Activated CD8-positive, alpha-beta T cell treated with anti-CD3 and anti-CD28 coated beads for 36 hours (primary cell): ENCODE measurements at regions of chr12 and their contacts with region 1.

Region 1: DNA sequence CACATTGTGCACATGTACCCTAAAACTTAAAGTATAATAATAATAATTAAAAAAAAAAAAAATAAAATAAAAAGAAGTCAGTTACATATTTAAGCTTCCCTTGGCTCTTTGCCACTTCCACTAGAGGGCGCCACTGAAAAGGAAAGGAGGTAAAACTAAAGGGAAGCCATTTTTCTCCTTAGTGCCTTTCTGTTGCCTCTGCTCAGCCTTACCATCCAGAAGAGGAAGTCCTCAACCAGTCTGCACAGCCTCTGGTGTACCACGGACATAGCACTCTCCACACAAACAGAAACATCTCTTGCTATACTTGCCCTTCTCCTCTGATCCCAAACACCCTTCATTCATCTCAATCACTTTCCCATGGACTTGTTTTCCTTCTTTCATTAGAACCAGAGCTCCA is 169.0 kb upstream of the EEA1 start:
- DNase-seq: peak; percentile 86
- ATAC-seq: peak; percentile 83
- H3K4me3 Mint-ChIP-seq: no peak overlapping the region
- H3K27ac Mint-ChIP-seq: peak overlapping the region; percentile 11
- H3K4me1 Mint-ChIP-seq: peaks cover 18% of the 10 kb centered on the region
- H3K27me3 Mint-ChIP-seq: no peaks in the 10 kb centered on the region
- CTCF ChIP-seq: peak; percentile 73

Region 2: GRCh38 chr12:92784795-92785562 is 313.1 kb before region 1 on chr12:
- CTCF ChIA-PET with region 1: no interaction called
- POLR2A ChIA-PET with region 1: no interaction called
- intact Hi-C with region 1: loop called (anchors 10 kb)
- DNase-seq: peak; percentile 30
- ATAC-seq: peak; percentile 99
- H3K4me3 Mint-ChIP-seq: no peak overlapping the region
- H3K27ac Mint-ChIP-seq: peak overlapping the region; percentile 21
- H3K4me1 Mint-ChIP-seq: peaks cover 3% of the 10 kb centered on the region
- H3K27me3 Mint-ChIP-seq: no peaks in the 10 kb centered on the region
- CTCF ChIP-seq: peak; percentile 61

Region 3: DNA sequence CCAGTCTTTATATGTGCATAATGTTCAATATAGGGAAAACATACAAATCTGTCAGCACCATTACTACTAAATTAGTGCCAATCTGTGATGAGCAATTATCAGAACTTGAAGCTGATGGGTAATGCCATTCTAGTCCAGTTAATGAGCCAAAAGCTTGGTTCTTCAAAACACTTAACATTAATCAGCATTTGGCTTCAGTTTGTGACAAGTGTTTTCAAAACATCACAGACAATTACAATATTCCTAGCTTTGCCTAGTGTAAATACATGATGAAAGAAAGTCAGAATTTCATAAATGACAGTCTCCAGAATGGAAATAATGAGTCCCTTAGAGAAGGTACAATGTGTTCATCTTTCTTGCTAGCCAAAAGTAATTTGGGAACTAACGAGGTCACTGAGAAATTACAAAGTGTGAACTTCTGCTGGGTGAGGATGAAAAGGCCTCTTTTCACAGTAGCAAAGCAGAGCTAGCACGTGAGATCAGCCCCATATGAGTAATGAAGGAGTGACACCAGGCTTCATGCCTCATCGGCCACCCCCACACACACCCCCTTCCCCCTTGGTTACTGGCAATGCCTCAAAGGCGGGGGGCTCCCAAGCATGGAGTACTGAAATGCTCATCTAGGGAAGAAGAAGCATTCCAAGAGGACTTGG is 11.6 kb after region 1 on chr12:
- CTCF ChIA-PET with region 1: interaction called, 50 read pairs
- POLR2A ChIA-PET with region 1: interaction called, 3 read pairs
- intact Hi-C with region 1: no loop called
- DNase-seq: peak; percentile 57
- ATAC-seq: peak; percentile 88
- H3K4me3 Mint-ChIP-seq: no peak overlapping the region
- H3K27ac Mint-ChIP-seq: no peak overlapping the region
- H3K4me1 Mint-ChIP-seq: peaks cover 9% of the 10 kb centered on the region
- H3K27me3 Mint-ChIP-seq: no peaks in the 10 kb centered on the region
- CTCF ChIP-seq: no peak

Region 4: GRCh38 chr12:93127582-93128331 is 29.7 kb after region 1 on chr12:
- CTCF ChIA-PET with region 1: no interaction called
- POLR2A ChIA-PET with region 1: no interaction called
- intact Hi-C with region 1: no loop called
- DNase-seq: no peak
- ATAC-seq: no peak
- H3K4me3 Mint-ChIP-seq: no peak overlapping the region
- H3K27ac Mint-ChIP-seq: no peak overlapping the region
- H3K4me1 Mint-ChIP-seq: no peaks in the 10 kb centered on the region
- H3K27me3 Mint-ChIP-seq: no peaks in the 10 kb centered on the region
- CTCF ChIP-seq: no peak

Region 5: DNA sequence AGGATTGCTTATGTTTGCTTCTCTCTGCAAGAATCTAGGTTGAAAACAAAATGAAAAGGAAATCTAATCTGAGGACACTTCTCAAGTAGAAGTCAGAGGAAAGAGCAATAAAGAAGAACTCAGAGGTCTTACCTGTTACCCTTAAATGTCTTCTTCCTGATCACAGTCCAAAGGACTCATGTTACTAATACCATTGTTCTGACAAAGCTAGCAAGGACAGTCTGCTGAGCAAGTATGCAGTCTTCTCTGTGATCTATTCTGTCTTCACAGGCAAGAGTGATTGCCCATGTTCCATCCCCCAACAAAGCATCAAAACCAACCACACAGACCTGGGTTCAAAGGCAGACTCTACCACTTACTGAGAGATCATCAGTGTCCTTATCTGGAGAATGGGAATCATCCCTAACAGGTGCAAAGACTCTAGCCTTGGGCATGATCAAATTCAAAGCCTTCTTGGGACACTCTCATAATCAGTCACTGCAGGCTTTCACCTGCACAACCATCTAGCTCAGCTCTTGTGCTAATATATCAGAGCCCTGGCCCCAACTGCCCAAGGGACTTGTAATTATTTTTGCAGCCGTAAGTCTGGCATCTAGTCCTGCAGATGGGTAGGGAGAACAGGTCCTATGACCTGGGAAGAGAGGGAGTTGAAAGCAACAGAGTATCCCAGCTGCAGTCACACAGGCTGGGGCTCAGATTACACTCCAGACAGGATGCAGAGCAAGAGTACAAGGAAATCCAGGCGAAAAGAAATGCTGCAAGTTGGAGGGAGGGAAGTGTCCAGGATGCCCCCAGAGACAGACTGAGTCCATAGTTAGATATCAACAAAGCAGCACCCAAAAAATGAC is 181.7 kb after region 1 on chr12:
- CTCF ChIA-PET with region 1: interaction called, 5 read pairs
- POLR2A ChIA-PET with region 1: no interaction called
- intact Hi-C with region 1: loop called (anchors 10 kb)
- DNase-seq: no peak
- ATAC-seq: no peak
- H3K4me3 Mint-ChIP-seq: no peak overlapping the region
- H3K27ac Mint-ChIP-seq: no peak overlapping the region
- H3K4me1 Mint-ChIP-seq: no peaks in the 10 kb centered on the region
- H3K27me3 Mint-ChIP-seq: no peaks in the 10 kb centered on the region
- CTCF ChIP-seq: no peak

Region 6: DNA sequence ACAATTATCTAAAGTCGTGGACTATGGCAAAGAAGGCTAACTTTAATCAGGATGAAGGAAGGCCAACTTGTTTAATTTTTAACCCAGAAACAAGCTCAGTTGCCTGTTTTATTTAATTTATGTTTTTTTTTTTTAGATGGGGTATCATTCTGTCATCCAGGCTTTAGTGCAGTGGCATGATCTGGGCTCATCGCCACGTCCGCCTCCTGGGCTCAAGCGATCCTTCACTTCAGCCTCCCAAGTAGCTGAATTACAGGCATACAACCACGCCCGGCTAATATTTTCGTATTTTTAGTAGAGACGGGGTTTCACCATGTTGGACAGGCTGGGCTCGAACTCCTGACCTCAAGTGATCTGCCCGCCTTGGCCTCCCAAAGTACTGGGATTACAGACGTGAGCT is 299.3 kb after region 1 on chr12:
- CTCF ChIA-PET with region 1: interaction called, 22 read pairs
- POLR2A ChIA-PET with region 1: no interaction called
- intact Hi-C with region 1: no loop called
- DNase-seq: no peak
- ATAC-seq: no peak
- H3K4me3 Mint-ChIP-seq: no peak overlapping the region
- H3K27ac Mint-ChIP-seq: no peak overlapping the region
- H3K4me1 Mint-ChIP-seq: peaks cover 7% of the 10 kb centered on the region
- H3K27me3 Mint-ChIP-seq: no peaks in the 10 kb centered on the region
- CTCF ChIP-seq: no peak